ENCODE measurements at regions of chr12 and their contacts with region 1.

Region 1: GRCh38 chr12:99386907-99387306 is 260.6 kb upstream of the GARIN6 start:
- DNase-seq: peak; percentile 28
- CTCF ChIP-seq: peak; percentile 35

Region 2: GRCh38 chr12:99367181-99367580 is 19.7 kb before region 1 on chr12:
- CTCF ChIA-PET with region 1: no interaction called
- POLR2A ChIA-PET with region 1: no interaction called
- DNase-seq: no peak
- CTCF ChIP-seq: no peak

Region 3: DNA sequence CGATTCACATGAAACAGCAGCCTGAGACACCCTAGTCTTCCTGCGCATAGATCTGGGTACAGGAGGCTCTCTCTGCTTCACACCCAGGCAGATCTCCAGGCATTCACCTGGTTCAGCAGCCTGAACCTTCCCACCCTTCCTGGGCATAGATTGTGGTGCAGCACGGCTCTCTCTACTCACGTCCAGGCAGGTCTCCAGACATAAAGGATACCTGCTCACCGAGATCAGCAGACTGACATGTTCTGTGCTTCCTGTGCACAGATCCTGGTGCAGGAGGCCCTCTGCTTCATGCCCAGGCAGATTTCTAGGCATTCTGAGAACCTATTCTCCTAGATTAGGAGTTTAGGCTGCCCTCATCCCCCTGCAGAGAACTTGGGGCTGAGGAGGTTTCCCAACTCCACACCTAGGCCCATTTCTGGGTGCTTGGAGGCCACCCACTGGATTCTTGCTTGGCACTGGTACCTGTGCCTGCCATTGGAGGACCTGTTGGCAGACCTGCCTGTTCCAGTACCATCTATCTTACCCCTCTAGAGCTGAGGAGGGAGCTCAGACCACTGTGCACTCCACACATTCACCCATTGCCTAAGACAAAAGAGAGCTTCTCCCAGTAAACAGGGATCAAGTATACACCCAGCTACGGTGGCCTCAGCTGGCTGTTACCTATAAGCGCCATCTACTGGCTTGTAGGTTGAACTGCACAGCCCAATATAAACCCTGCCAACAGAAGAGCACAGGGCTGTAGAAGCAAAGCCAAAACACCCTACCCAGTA is 232.7 kb after region 1 on chr12:
- CTCF ChIA-PET with region 1: interaction called, 90 read pairs
- POLR2A ChIA-PET with region 1: no interaction called
- DNase-seq: peak; percentile 13
- CTCF ChIP-seq: peak; percentile 75

Region 4: DNA sequence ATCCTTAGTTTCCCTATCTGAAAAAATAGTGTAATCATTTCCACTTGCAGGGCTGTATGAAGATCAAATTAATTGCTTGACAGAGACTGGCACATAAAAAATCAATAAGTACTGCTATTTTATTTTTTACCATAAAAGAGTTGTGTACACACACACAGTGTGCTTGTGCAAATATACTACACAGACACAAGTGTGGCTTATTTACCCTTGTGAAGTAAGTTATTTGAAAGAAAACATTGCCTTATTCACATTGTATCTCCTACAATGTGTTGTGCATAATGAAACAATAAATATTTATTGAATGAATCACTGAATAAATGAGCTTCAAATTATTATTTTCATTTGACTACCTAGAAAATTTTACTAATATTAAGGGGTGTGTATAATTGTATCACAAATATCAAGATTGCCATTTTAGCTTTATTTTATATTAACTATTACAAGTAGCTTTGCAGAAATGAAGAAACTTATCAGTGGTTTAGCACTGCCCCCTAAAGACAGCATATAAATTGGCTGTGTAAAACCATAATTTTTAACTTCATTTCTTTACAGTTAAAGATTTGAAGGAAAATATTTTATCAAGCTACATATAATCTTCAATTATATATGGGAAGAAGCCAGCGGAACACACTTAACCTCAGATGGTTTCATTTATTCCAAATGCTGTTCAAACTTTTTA is 271.9 kb after region 1 on chr12:
- CTCF ChIA-PET with region 1: interaction called, 17 read pairs
- POLR2A ChIA-PET with region 1: no interaction called
- DNase-seq: no peak
- CTCF ChIP-seq: peak; percentile 24